A549 (cell line): ENCODE measurements at regions of chr6 and their contacts with region 1.

Region 1: DNA sequence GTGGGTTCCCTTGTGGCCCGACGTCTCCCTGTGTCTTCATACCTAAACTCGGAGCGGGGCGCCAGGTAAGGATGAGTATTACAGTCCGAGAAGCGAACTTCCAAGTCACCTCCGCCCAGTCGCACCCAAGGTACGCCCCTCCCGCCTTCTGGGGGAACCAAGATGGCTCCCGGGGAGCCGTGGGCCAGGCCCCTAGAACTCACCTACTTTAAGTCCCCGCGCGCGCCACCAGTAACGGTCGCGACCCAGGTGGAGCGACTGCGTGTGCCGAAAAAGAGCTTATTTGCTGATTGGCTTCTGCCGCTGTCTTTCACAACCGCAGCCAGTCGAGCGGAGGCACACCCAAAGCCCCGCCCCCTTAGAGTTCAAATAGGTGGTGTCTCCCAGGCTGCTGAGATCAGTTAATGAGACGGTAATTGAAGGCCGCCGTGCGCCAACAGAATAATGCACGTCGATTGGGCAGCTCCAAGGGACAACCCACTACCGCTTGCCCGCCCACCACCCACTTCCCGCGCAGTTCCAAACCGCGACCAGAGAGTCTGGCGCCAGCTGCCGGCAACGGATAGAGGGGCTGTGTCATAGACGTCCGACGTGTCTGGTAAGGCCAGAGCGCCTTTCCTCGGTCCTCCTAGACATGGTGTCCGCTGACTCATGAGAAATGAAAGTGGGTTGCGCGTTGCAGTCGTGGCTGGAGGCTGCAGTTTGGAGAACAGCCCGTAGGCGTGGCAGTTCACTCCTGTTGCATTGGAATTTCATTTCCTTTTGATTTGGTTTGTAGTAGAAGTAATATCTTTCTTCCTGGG is at the start of gene MDC1:
- DNase-seq: peak; percentile 84 to 100
- ATAC-seq: peak; percentile 83 to 87
- H3K4me3 ChIP-seq: peak within 1 kb of the TSS; percentile 63
- H3K27ac ChIP-seq: peak within 1 kb of the TSS; percentile 99 to 100
- H3K4me1 ChIP-seq: peaks cover 22% of the 10 kb centered on the region
- CTCF ChIP-seq: no peak
- EP300 ChIP-seq: no peak
- POLR2A ChIP-seq: 0 out of 2 replicates have a peak, but pooled peaks have one; percentile 32
- RAD21 ChIP-seq: no peak; a peak in 1 of 5 replicates
- polyA plus RNA-seq, gene MDC1: 8.2 and 13.3 TPM in 2 replicates

Region 2: GRCh38 chr6:30672445-30673253 is 44.6 kb before region 1 on chr6 and contains the start of gene DHX16:
- CTCF ChIA-PET with region 1: interaction called, 539 read pairs
- POLR2A ChIA-PET with region 1: interaction called, 4 read pairs
- DNase-seq: peak; percentile 82 to 97
- ATAC-seq: peak; percentile 89 to 91
- H3K4me3 ChIP-seq: peak within 1 kb of the TSS; percentile 79
- H3K27ac ChIP-seq: peak within 1 kb of the TSS; percentile 78 to 90
- H3K4me1 ChIP-seq: peaks cover 7% of the 10 kb centered on the region; the same call in 1 of the 3 replicates
- CTCF ChIP-seq: peak; percentile 74
- EP300 ChIP-seq: no peak
- POLR2A ChIP-seq: peak; percentile 24
- RAD21 ChIP-seq: peak; percentile 47 to 50; a peak in 4 of 5 replicates
- polyA plus RNA-seq, gene DHX16: 31.3 and 31.6 TPM in 2 replicates

Region 3: GRCh38 chr6:30686908-30687658 is 30.2 kb before region 1 on chr6:
- CTCF ChIA-PET with region 1: interaction called, 539 read pairs
- POLR2A ChIA-PET with region 1: interaction called, 12 read pairs
- DNase-seq: peak; percentile 54 to 85
- ATAC-seq: peak; percentile 51 to 74
- H3K4me3 ChIP-seq: peak overlapping the region; percentile 84
- H3K27ac ChIP-seq: peak overlapping the region; percentile 83 to 99
- H3K4me1 ChIP-seq: peaks cover 63% of the 10 kb centered on the region
- CTCF ChIP-seq: no peak
- EP300 ChIP-seq: no peak
- POLR2A ChIP-seq: no peak; the same call in 1 of the 2 replicates
- RAD21 ChIP-seq: no peak

Region 4: DNA sequence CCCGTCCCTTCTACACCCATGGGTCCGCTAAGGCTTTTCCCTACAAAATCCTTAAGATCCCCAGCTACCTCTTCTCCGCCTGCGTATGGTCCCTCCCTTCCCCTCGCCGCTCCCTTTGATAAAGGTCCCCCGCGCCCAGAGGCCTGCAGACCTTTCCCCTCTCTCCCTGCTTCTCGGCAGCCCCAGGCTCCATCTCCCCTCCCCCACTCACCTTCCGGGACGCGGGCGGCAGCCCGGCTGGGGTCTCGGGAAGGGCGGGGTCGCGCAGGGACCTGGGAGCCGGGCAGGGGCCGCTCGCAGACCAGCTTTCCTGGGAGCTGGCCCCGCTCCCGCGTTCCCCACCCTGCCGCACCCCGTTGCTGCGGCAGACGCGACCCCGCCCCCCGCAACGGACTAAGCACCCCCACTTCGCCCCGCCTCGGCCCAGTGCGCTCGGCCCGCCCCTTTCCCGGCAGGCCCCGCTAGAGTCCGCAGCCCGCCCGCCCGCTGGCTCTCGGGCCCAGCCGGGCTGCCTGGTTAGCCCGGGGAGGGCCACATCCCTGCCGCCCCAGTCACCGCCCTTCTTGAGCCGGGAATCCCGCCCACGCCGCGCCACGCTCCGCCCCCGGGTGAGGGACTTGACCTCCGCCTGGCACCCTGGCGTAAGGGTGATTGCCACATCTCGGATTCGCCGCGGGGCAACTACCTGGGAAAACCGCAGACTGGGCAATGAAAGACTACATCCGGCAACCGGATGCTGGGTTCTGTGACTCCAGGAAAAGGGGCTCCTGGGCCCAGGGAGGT is 25.3 kb after region 1 on chr6 and contains the start of gene FLOT1:
- CTCF ChIA-PET with region 1: interaction called, 14 read pairs
- POLR2A ChIA-PET with region 1: interaction called, 4 read pairs
- DNase-seq: peak; percentile 64 to 94
- ATAC-seq: peak; percentile 74 to 78
- H3K4me3 ChIP-seq: peak within 1 kb of the TSS; percentile 99
- H3K27ac ChIP-seq: peak within 1 kb of the TSS; percentile 97 to 98
- H3K4me1 ChIP-seq: peaks cover 64% of the 10 kb centered on the region
- CTCF ChIP-seq: no peak
- EP300 ChIP-seq: peak; percentile 5 to 41; a peak in 2 of 5 replicates
- POLR2A ChIP-seq: peak; percentile 74
- RAD21 ChIP-seq: peak in 1 of 2 experiments; percentile 49; a peak in 3 of 5 replicates
- polyA plus RNA-seq, gene FLOT1: 135 and 136 TPM in 2 replicates